ENCODE measurements at regions of chr7 and their contacts with region 1.

Region 1: DNA sequence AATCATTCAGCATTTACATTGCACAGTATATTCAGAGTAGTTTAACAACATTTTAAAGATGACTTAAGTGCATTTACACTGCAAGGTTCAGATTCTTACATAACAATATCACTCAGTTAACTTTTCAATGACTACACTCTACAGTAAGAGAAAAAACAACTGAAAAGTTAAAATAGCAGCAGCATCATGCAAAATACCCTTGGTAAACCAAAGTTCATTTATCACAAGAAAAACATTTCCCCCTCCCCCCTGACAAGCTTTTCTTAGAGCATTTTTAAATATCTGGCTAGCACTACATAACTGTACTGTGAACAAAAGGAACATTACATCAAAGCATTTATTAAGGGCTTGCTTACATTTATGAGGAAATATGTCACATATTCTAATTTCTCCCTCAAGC is 179.5 kb upstream of the HGF start:
- DNase-seq: no peak
- H3K4me3 ChIP-seq: no peak overlapping the region
- H3K27ac ChIP-seq: no peak overlapping the region
- H3K4me1 ChIP-seq: no peaks in the 10 kb centered on the region
- H3K27me3 ChIP-seq: no peaks in the 10 kb centered on the region
- CTCF ChIP-seq: no peak
- POLR2A ChIP-seq: no peak

Region 2: DNA sequence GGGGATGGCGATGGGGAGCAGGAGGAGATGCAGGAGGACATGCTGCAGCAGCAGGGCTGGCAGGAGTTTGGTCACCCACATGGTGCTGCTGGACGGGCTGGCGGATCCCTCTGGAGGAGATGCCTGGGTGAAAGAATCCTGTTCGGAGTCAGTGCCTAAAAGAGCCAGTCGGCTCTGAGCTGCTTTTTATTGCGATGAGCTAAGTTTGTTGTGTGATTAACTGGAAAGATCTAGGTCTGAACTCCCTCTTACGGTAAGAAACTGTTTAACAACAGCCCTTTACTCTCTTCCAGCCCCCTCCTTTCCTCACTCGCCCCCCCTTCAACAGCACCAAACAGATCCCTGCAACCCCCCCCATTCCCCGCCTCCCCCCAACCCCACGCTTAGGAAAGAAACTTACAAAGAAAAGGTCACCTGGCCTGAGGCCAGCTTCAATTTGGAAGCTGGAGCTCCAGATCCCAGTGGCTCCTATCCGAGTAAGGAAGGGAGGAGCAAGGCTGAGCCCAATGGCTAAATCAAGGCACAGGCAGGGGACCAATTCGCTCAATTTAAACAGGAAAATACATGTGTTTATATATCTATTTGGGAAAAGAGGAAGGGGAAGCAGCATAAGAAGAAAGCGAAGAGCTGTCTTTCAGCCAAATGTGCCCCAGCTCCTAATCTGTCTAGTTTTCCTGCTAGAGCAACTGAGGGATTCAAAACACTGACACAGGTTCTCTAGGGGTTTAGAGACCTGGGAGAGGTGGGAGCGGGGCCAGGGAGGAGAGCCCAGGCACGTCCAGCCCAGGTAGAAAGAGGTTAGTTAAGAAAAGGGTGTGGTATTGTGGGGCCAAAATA is 179.2 kb before region 1 on chr7 and contains the start of gene HGF:
- CTCF ChIA-PET with region 1: no interaction called
- POLR2A ChIA-PET with region 1: no interaction called
- dilution Hi-C with region 1: no loop called
- intact Hi-C with region 1: loop called (anchors 5 kb)
- DNase-seq: peak; percentile 38
- H3K4me3 ChIP-seq: peak within 1 kb of the TSS in 1 of 3 experiments; percentile 27
- H3K27ac ChIP-seq: no peak within 1 kb of the TSS
- H3K4me1 ChIP-seq: peaks cover 3% of the 10 kb centered on the region
- H3K27me3 ChIP-seq: no peaks in the 10 kb centered on the region
- CTCF ChIP-seq: peak in 1 of 2 donors; percentile 8
- POLR2A ChIP-seq: no peak
- total RNA-seq, gene HGF: 0.15 and 0.35 TPM in 2 replicates

Measured in endothelial cell of umbilical vein (primary cell).